ENCODE measurements at regions of chr10 and their contacts with region 1.

Region 1: DNA sequence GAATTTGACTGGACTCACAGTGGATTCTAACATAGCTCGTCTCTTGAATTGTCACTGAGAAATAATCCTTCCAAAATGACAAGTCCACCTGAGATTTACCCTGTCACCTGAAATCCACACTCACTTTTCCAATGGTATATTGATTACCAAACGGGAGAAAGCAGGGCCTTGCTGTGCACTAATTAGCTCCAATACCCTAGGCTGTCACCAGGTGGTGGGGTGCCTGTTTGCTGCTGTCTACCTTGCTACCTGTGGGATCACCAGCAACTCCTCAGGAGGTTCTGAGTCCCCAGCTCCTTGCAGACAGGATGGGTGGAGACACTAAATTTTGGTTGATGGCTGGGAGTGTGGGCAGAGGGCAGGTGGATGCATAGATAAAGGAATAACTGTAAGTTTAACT is 237.1 kb upstream of the ZNF32 start:
- DNase-seq: no peak
- CTCF ChIP-seq: peak; percentile 12

Region 2: DNA sequence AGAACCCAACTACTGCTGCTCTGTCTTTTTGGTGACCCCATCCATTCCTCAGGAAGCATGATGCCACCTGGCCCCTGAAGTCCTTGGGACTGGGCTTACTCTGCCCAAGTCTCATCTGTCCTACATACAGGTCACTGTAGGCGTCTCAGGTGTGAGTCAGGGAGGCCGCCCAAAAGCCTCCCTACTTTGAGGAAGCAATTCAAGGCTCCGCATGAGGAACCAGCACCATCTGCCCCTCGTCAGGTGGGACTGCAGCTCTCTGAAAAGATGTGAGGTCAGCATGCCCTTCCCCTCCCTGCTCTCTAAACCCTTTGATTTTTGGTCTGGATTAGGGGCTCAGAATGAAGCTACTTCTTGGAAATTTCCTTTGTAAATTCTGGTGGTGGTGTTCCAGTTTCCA is 144.3 kb after region 1 on chr10:
- CTCF ChIA-PET with region 1: interaction called, 11 read pairs
- POLR2A ChIA-PET with region 1: no interaction called
- DNase-seq: peak; percentile 61
- CTCF ChIP-seq: peak; percentile 31

Measured in GM10248 (cell line).